Activated T-helper 1 cell treated with anti-CD3 and anti-CD28 coated beads, Interleukin-12 subunit alpha, Interleukin-12 subunit beta, Interleukin-2, Interleukin-4 antibody, amounts not matched to agents 30 ng/mL and 10 ng/mL and 1 ng/mL, durations not matched to agents 14 hours and 24 hours and 36 hours (primary cell): ENCODE measurements at regions of chr12 and their contacts with region 1.

Region 1: GRCh38 chr12:39272871-39273770 is 169.8 kb downstream of the KIF21A start:
- DNase-seq: no peak
- H3K4me3 Mint-ChIP-seq: no peak overlapping the region
- H3K27ac Mint-ChIP-seq: no peak overlapping the region
- H3K4me1 Mint-ChIP-seq: peaks cover 4% of the 10 kb centered on the region
- H3K27me3 Mint-ChIP-seq: no peaks in the 10 kb centered on the region

Region 2: GRCh38 chr12:38138225-38139221 is 1134.6 kb before region 1 on chr12:
- intact Hi-C with region 1: loop called (anchors 5 kb)
- DNase-seq: peak; percentile 30
- H3K4me3 Mint-ChIP-seq: peak overlapping the region; percentile 83
- H3K27ac Mint-ChIP-seq: no peak overlapping the region
- H3K4me1 Mint-ChIP-seq: no peaks in the 10 kb centered on the region
- H3K27me3 Mint-ChIP-seq: peaks cover 5% of the 10 kb centered on the region

Region 3: GRCh38 chr12:38921025-38921677 is 352.0 kb before region 1 on chr12:
- intact Hi-C with region 1: loop called (anchors 1 kb)
- DNase-seq: no peak
- H3K4me3 Mint-ChIP-seq: no peak overlapping the region
- H3K27ac Mint-ChIP-seq: no peak overlapping the region
- H3K4me1 Mint-ChIP-seq: no peaks in the 10 kb centered on the region
- H3K27me3 Mint-ChIP-seq: peaks cover 2% of the 10 kb centered on the region

Region 4: DNA sequence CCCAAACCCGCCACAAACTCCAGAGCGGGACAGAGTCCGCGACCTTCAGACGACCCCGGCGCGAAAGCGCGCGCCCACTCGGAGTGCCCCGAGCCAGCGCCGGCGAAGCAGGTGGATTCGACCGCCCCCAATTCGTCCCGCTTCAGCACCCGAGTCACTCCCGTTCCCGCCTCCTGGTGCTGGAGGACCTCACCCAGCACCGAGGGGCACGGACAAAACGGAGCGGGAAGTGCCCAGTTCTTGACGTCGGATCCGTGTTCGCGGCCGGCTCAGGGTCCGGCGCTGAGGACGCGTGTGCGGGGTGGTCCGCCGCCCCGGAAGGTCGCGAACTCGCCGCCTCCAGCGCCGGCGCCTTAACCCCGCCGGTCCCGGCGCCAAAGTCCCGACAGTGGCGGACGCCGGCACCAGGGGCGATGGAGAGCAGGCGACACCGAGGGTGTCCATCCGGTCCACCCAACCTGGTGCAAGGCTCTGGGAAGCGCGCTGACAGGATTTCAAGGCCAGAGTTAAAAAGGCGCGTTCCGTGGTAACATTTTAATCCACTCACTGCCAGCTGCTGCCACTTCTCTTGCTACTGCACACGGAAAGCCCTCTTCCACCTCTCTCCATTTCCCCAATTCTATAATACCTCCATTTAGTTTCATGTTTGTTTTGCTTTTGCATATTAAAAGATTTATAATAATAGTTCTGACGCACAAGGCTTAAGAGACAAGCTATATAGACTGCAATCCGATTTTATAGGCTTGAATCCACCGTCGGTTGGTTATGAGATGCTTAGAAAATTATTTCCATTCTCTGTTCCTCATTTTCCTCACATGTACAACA is 127.7 kb before region 1 on chr12:
- intact Hi-C with region 1: loop called (anchors 1 kb)
- DNase-seq: peak; percentile 19
- H3K4me3 Mint-ChIP-seq: peak overlapping the region; percentile 31
- H3K27ac Mint-ChIP-seq: no peak overlapping the region
- H3K4me1 Mint-ChIP-seq: no peaks in the 10 kb centered on the region
- H3K27me3 Mint-ChIP-seq: peaks cover 25% of the 10 kb centered on the region